Adrenal gland (tissue), 19 donors: ENCODE measurements at regions of chr9 and their contacts with region 1.

Region 1: GRCh38 chr9:127943731-127944144 is 6.1 kb upstream of the DPM2 start:
- DNase-seq: peak; percentile 76 to 94 (median 87)
- H3K4me3 ChIP-seq: no peak overlapping the region
- H3K27ac ChIP-seq: peak overlapping the region in 2 of 5 donors; percentile 27 to 34
- H3K4me1 ChIP-seq: peaks cover 0 to 14% of the 10 kb centered on the region in 2 donors
- H3K27me3 ChIP-seq: no peaks in the 10 kb centered on the region
- CTCF ChIP-seq: peak; percentile 81 to 96 (median 92)
- POLR2A ChIP-seq: no peak

Region 2: GRCh38 chr9:127869310-127870152 is 74.2 kb before region 1 on chr9:
- intact Hi-C with region 1: no loop called
- DNase-seq: peak; percentile 88 to 94 (median 90)
- H3K4me3 ChIP-seq: no peak overlapping the region
- H3K27ac ChIP-seq: peak overlapping the region in 1 of 5 donors; percentile 54
- H3K4me1 ChIP-seq: peaks cover 7 to 11% of the 10 kb centered on the region in 2 donors
- H3K27me3 ChIP-seq: no peaks in the 10 kb centered on the region
- CTCF ChIP-seq: peak; percentile 71 to 98 (median 93)
- POLR2A ChIP-seq: no peak

Region 3: DNA sequence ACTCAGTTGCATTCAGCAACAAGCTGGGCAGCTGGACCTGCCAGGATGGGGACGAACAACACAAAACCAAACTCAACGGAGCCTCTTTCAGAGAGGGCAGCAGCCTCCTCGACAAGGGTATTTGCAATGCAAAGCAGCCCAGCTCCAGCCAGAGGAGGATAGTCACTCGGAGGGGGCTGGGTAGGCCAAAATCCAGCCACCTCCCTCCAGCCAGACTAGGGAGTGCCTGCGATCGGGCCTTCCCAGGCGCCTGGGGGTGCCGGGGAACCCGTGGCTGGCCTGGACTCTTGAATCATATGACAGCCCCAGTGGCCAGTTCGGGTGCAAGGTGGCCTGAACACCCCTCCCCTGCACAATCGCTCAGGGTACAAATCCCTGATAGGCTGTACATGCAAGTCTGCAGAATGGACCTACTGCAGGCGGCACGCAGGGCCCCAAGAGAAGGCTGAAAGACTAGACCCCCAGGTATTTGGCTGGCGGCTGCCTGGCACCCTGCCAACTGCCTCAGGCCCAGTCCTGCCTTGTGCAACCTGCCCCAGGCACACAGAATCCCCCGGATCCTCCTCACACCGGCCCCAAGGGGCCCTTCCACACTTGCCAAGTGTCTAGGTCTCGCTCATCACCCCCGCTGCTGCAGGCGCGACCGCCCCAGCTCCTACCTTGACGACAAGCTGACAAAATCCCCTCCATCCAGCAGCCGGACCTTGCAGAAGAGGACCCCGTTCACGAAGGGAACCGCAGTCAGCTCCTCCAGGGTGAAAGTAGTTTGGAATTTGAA is 35.8 kb after region 1 on chr9:
- intact Hi-C with region 1: loop called in 1 of 2 experiments (anchors 5 kb)
- DNase-seq: peak in 6 of 7 donors; percentile 63 to 80 (median 73)
- H3K4me3 ChIP-seq: peak overlapping the region; percentile 71 to 99 (median 84)
- H3K27ac ChIP-seq: peak overlapping the region in 4 of 5 donors; percentile 59 to 95 (median 91)
- H3K4me1 ChIP-seq: peaks cover 57 to 64% of the 10 kb centered on the region in 2 donors
- H3K27me3 ChIP-seq: no peaks in the 10 kb centered on the region
- CTCF ChIP-seq: peak in 1 of 6 experiments; percentile 4
- POLR2A ChIP-seq: peak; percentile 21 to 68

Region 4: DNA sequence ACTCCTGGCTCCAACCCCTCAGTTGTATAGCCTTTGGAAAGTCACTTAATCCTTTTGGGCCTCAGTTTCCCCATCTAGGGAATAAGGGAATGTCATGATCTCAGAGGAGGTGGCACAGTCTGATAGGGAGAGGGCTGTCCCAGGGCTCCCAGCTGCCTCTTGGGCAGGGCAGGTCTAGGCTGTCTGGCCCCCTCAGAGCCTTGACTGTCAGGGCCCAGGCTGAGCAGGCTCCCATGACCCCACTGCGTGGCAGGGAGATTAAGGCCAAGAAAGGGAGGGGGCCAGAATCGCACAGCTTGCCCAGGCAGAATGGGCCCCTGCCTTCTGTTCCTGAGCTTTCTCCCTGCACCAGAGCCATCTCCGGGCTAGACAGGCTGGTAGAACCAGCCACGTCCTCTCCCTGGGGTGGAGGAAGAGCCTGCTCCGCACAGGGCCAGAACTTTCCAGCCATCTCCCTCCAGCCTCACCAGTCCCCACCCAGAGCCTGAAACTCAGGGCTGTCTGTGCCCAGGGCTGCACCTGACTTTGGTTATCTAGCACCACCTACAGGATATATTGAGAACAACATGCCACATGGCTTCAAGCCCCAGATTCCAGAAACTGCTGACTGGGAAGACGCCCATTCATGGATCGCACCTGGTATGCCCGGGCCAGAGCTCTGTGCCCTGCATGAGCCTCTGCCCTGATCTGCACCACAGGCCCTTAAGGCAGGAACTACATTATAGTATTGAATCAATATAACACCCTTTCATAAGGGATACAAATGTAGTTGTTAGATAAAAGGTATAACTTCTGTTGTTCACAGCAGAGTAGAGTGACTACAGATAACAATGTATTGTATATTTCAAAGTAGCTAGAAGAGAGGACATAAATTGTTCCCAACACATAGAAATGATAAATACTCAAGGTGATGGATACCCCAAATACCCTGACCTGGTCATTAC is 91.4 kb after region 1 on chr9:
- intact Hi-C with region 1: loop called (anchors 1 to 2 kb)
- DNase-seq: peak; percentile 68 to 87 (median 80)
- H3K4me3 ChIP-seq: no peak overlapping the region
- H3K27ac ChIP-seq: no peak overlapping the region
- H3K4me1 ChIP-seq: peaks cover 0 to 6% of the 10 kb centered on the region in 2 donors
- H3K27me3 ChIP-seq: no peaks in the 10 kb centered on the region
- CTCF ChIP-seq: peak; percentile 87 to 97 (median 95)
- POLR2A ChIP-seq: no peak

Region 5: DNA sequence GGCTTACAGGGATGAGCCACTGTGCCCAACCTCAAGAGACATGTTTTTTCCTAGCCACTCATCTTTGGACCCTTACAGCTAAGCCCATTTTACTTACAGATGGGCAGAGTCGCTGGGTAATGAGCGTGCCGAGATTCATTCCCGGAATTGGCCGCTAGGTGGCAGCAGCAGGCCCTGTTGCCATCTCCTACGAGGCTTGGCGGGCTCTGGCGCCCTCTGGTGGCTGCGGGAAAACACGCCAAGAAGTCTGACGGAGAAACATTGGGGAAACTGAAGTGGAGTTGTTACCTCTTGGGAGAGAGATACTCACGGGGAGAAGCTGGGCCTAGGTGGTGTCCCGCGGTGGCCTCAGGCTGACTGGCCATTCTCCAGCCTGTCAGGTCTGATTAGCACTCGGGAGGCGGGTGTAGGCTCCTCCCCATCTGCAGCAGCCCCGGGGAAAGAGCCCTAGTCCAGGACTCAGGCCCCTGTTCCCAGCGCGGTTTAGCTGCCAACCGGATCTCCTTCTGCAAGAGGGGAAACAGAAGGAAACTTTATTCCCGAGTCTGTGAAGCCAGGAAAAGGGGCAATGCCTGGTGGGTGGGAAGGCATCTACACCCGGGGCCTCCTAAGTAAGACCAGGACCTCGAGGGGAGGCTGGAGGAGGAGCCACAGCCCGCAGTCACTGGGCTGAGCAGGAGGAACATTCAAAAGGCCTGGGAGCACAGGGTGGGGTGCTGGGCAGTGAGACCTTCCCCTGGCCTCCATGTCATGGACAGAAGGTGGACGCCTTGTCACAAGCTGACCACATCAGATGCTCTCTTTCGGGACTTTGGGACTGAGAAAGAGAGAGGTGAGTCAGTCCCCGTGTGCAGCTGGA is 174.1 kb after region 1 on chr9:
- intact Hi-C with region 1: loop called (anchors 2 to 5 kb)
- DNase-seq: peak; percentile 90 to 97 (median 95)
- H3K4me3 ChIP-seq: no peak overlapping the region
- H3K27ac ChIP-seq: no peak overlapping the region
- H3K4me1 ChIP-seq: no peaks in the 10 kb centered on the region
- H3K27me3 ChIP-seq: no peaks in the 10 kb centered on the region
- CTCF ChIP-seq: peak; percentile 100
- POLR2A ChIP-seq: no peak

Region 6: GRCh38 chr9:128124873-128125569 is 181.3 kb after region 1 on chr9:
- intact Hi-C with region 1: loop called in 1 of 2 experiments (anchors 5 kb)
- DNase-seq: peak in 6 of 7 donors; percentile 58 to 77 (median 68)
- H3K4me3 ChIP-seq: no peak overlapping the region
- H3K27ac ChIP-seq: peak overlapping the region in 1 of 5 donors; percentile 41
- H3K4me1 ChIP-seq: peaks cover 21 to 29% of the 10 kb centered on the region in 2 donors
- H3K27me3 ChIP-seq: no peaks in the 10 kb centered on the region
- CTCF ChIP-seq: peak; percentile 21 to 48 (median 41)
- POLR2A ChIP-seq: no peak